ENCODE measurements at regions of chr3 and their contacts with region 1.

Region 1: GRCh38 chr3:8324740-8325139 is 176.9 kb upstream of the LMCD1 start:
- DNase-seq: peak; percentile 16 to 58 (median 28)
- ATAC-seq: peak; percentile 69 to 80 (median 74)
- H3K4me3 ChIP-seq: no peak overlapping the region
- H3K27ac ChIP-seq: no peak overlapping the region
- H3K4me1 ChIP-seq: peaks cover 0 to 4% (median 0%) of the 10 kb centered on the region in 12 donors
- H3K27me3 ChIP-seq: no peaks in the 10 kb centered on the region
- CTCF ChIP-seq: peak; percentile 28 to 57 (median 45)
- POLR2A ChIP-seq: no peak

Region 2: GRCh38 chr3:7779331-7779730 is 545.4 kb before region 1 on chr3:
- intact Hi-C with region 1: no loop called
- DNase-seq: no peak
- ATAC-seq: no peak
- H3K4me3 ChIP-seq: no peak overlapping the region
- H3K27ac ChIP-seq: no peak overlapping the region
- H3K4me1 ChIP-seq: no peaks in the 10 kb centered on the region
- H3K27me3 ChIP-seq: no peaks in the 10 kb centered on the region
- CTCF ChIP-seq: no peak
- POLR2A ChIP-seq: no peak

Region 3: GRCh38 chr3:8416965-8417364 is 92.2 kb after region 1 on chr3:
- intact Hi-C with region 1: loop called in 9 of 10 experiments (anchors 2 to 5 kb)
- DNase-seq: no peak
- ATAC-seq: peak in 2 of 4 donors; percentile 47 to 48
- H3K4me3 ChIP-seq: peak overlapping the region in 2 of 12 donors; percentile 14 to 19
- H3K27ac ChIP-seq: no peak overlapping the region
- H3K4me1 ChIP-seq: peaks cover 0 to 5% (median 0%) of the 10 kb centered on the region in 12 donors
- H3K27me3 ChIP-seq: no peaks in the 10 kb centered on the region
- CTCF ChIP-seq: no peak
- POLR2A ChIP-seq: no peak

Region 4: GRCh38 chr3:8607234-8608040 is 282.7 kb after region 1 on chr3:
- intact Hi-C with region 1: loop called in 1 of 10 experiments (anchors 10 kb)
- DNase-seq: peak in 4 of 5 donors; percentile 73 to 81 (median 76)
- ATAC-seq: peak; percentile 97 to 98 (median 98)
- H3K4me3 ChIP-seq: no peak overlapping the region
- H3K27ac ChIP-seq: peak overlapping the region in 3 of 12 donors; percentile 6 to 49 (median 40)
- H3K4me1 ChIP-seq: peaks cover 0 to 27% (median 20%) of the 10 kb centered on the region in 12 donors
- H3K27me3 ChIP-seq: no peaks in the 10 kb centered on the region
- CTCF ChIP-seq: peak; percentile 53 to 91 (median 82)
- POLR2A ChIP-seq: no peak

Region 5: GRCh38 chr3:8622873-8623691 is 298.3 kb after region 1 on chr3:
- intact Hi-C with region 1: loop called in 1 of 10 experiments (anchors 10 kb)
- DNase-seq: peak; percentile 63 to 79 (median 71)
- ATAC-seq: peak; percentile 65 to 92 (median 84)
- H3K4me3 ChIP-seq: peak overlapping the region in 2 of 12 donors; percentile 10 to 19
- H3K27ac ChIP-seq: peak overlapping the region in 1 of 12 donors; percentile 30
- H3K4me1 ChIP-seq: peaks cover 0 to 25% (median 12%) of the 10 kb centered on the region in 12 donors
- H3K27me3 ChIP-seq: no peaks in the 10 kb centered on the region
- CTCF ChIP-seq: peak; percentile 78 to 95 (median 88)
- POLR2A ChIP-seq: no peak

Region 6: DNA sequence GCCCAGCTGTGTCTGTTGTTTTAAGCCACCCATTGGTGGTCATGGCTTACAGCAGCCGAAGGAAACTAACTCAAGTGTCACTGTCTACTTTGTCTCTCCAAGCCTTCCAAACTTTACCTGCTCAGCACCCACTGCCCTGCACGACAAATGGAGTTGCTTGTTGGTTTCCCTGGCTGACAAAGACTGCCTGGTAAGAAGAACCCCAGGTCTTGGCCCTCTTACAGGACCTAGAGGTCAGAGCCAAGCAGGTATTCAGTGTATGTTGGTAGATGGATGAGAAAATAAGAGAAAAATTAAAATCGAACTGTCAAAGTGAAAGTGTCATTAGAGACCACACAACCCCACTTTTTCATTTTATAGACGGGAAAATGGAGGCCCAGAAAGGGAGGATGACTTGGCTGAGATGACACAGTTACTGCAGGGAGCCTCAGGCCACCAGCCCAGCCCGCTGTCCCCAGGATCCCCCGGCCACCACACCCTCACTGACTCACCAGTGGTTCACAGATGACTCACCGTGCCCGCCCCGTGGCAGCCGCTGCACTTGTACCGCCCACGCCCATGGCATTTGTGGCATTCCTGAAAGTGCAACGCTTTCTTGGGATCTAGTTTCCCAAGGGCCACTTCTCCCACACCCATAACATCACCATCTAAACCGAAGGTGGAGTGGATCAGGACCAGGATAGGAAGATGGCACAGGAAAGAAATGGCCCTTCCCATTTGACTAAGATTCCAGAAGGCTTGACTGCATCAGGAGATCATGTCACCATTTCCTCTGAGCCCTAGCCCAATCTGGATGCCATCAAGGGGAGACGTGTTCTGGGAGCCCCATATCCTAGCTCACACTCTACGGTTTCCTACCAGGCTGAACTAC is 304.6 kb after region 1 on chr3:
- intact Hi-C with region 1: loop called in 2 of 10 experiments (anchors 10 kb)
- DNase-seq: peak in 1 of 5 donors; percentile 52
- ATAC-seq: peak in 2 of 4 donors; percentile 42 to 64
- H3K4me3 ChIP-seq: no peak overlapping the region
- H3K27ac ChIP-seq: no peak overlapping the region
- H3K4me1 ChIP-seq: no peaks in the 10 kb centered on the region
- H3K27me3 ChIP-seq: no peaks in the 10 kb centered on the region
- CTCF ChIP-seq: no peak
- POLR2A ChIP-seq: no peak

Measured in heart left ventricle (tissue), 16 donors.